CD4-positive, alpha-beta T cell (primary cell): ENCODE measurements at regions of chr10 and their contacts with region 1.

Region 1: GRCh38 chr10:125868372-125868975 is 12.6 kb downstream of the DHX32 start:
- DNase-seq: peak in 4 of 14 experiments; percentile 17 to 53 (median 34)
- ATAC-seq: no peak
- H3K4me3 ChIP-seq: no peak overlapping the region
- H3K4me3 Mint-ChIP-seq: no peak overlapping the region
- H3K27ac ChIP-seq: no peak overlapping the region
- H3K27ac Mint-ChIP-seq: no peak overlapping the region
- H3K4me1 ChIP-seq: no peaks in the 10 kb centered on the region
- H3K4me1 Mint-ChIP-seq: no peaks in the 10 kb centered on the region
- H3K27me3 ChIP-seq: no peaks in the 10 kb centered on the region
- H3K27me3 Mint-ChIP-seq: no peaks in the 10 kb centered on the region
- CTCF ChIP-seq: peak; percentile 89

Region 2: GRCh38 chr10:126749015-126749655 is 880.7 kb after region 1 on chr10:
- CTCF ChIA-PET with region 1: no interaction called
- POLR2A ChIA-PET with region 1: no interaction called
- intact Hi-C with region 1: loop called in 1 of 2 experiments (anchors 5 kb)
- DNase-seq: peak in 11 of 14 experiments; percentile 1 to 56 (median 9)
- ATAC-seq: no peak
- H3K4me3 ChIP-seq: no peak overlapping the region
- H3K4me3 Mint-ChIP-seq: no peak overlapping the region
- H3K27ac ChIP-seq: no peak overlapping the region
- H3K27ac Mint-ChIP-seq: no peak overlapping the region
- H3K4me1 ChIP-seq: no peaks in the 10 kb centered on the region
- H3K4me1 Mint-ChIP-seq: no peaks in the 10 kb centered on the region
- H3K27me3 ChIP-seq: no peaks in the 10 kb centered on the region
- H3K27me3 Mint-ChIP-seq: no peaks in the 10 kb centered on the region
- CTCF ChIP-seq: peak; percentile 19